Psoas muscle (tissue), 8 donors: ENCODE measurements at regions of chr19 and their contacts with region 1.

Region 1: GRCh38 chr19:43784981-43785808 is 4.4 kb upstream of the KCNN4 start:
- DNase-seq: peak in 1 of 2 donors; percentile 46
- ATAC-seq: peak; percentile 65 to 85 (median 74)
- H3K4me3 ChIP-seq: no peak overlapping the region
- H3K27ac ChIP-seq: no peak overlapping the region
- H3K4me1 ChIP-seq: no peaks in the 10 kb centered on the region
- H3K27me3 ChIP-seq: peaks cover 0 to 23% (median 0%) of the 10 kb centered on the region in 3 donors
- CTCF ChIP-seq: peak; percentile 92

Region 2: DNA sequence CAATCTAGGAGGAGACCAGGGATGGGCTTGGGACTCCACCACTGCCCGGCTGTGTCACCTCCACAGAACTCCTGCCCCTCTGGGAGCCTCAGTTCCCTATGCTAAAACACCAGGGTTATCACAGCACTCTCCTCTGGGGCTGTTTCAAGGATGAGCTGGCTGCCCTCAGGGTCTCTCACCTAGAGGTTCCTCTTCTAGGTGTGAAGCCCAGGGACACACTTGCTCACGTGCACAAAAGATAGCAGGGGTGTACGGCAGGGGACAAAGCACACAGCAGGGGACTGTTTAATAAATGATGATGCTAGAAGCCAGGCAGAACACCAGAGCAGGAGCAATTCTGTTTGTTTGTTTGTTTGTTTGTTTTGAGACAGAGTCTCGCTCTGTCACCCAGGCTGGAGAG is 303.0 kb before region 1 on chr19:
- intact Hi-C with region 1: no loop called
- DNase-seq: no peak
- ATAC-seq: no peak
- H3K4me3 ChIP-seq: no peak overlapping the region
- H3K27ac ChIP-seq: no peak overlapping the region
- H3K4me1 ChIP-seq: no peaks in the 10 kb centered on the region
- H3K27me3 ChIP-seq: no peaks in the 10 kb centered on the region
- CTCF ChIP-seq: no peak

Region 3: GRCh38 chr19:43743022-43743421 is 42.2 kb before region 1 on chr19:
- intact Hi-C with region 1: loop called (anchors 1 to 5 kb)
- DNase-seq: no peak
- ATAC-seq: no peak
- H3K4me3 ChIP-seq: no peak overlapping the region
- H3K27ac ChIP-seq: no peak overlapping the region
- H3K4me1 ChIP-seq: no peaks in the 10 kb centered on the region
- H3K27me3 ChIP-seq: no peaks in the 10 kb centered on the region
- CTCF ChIP-seq: no peak

Region 4: GRCh38 chr19:43798546-43799409 is 13.6 kb after region 1 on chr19:
- intact Hi-C with region 1: no loop called
- DNase-seq: peak in 1 of 2 donors; percentile 42
- ATAC-seq: no peak
- H3K4me3 ChIP-seq: peak overlapping the region; percentile 56
- H3K27ac ChIP-seq: no peak overlapping the region
- H3K4me1 ChIP-seq: no peaks in the 10 kb centered on the region
- H3K27me3 ChIP-seq: peaks cover 0 to 36% (median 23%) of the 10 kb centered on the region in 3 donors
- CTCF ChIP-seq: no peak

Region 5: GRCh38 chr19:43826787-43827754 is 41.9 kb after region 1 on chr19 and contains the start of gene ZNF283:
- intact Hi-C with region 1: no loop called
- DNase-seq: peak; percentile 89 to 92
- ATAC-seq: peak; percentile 99 to 100 (median 100)
- H3K4me3 ChIP-seq: peak within 1 kb of the TSS; percentile 84
- H3K27ac ChIP-seq: peak within 1 kb of the TSS; percentile 69
- H3K4me1 ChIP-seq: peaks cover 9% of the 10 kb centered on the region
- H3K27me3 ChIP-seq: peaks cover 0 to 2% (median 0%) of the 10 kb centered on the region in 3 donors
- CTCF ChIP-seq: no peak
- total RNA-seq, gene ZNF283: 3.1 to 8.7 (median 4.6) TPM

Region 6: GRCh38 chr19:43842007-43842406 is 56.8 kb after region 1 on chr19:
- intact Hi-C with region 1: no loop called
- DNase-seq: no peak
- ATAC-seq: no peak
- H3K4me3 ChIP-seq: no peak overlapping the region
- H3K27ac ChIP-seq: no peak overlapping the region
- H3K4me1 ChIP-seq: no peaks in the 10 kb centered on the region
- H3K27me3 ChIP-seq: no peaks in the 10 kb centered on the region
- CTCF ChIP-seq: no peak